Calu3 (cell line): ENCODE measurements at regions of chr9 and their contacts with region 1.

Region 1: DNA sequence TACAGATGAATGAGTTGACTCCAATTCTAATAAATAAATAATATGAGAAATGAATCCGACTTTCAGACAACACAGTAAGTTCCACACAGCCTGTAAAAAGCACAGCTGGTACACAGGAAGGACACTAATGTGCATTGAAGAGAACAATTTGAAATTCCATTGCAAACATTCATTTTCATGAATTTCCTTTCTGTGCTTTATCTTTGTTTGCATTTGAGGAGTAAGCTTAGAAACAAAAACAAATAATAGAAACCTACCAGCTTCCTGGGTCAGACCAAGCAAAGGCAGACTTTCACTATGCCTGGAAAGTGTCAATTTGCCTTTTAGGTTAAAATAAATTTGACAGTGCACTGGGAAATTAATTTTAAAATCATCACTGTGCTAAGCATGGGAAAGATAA is 143.8 kb upstream of the VLDLR start:
- DNase-seq: no peak
- H3K4me3 Mint-ChIP-seq: no peak overlapping the region
- H3K27ac Mint-ChIP-seq: no peak overlapping the region
- H3K4me1 Mint-ChIP-seq: no peaks in the 10 kb centered on the region
- H3K27me3 Mint-ChIP-seq: no peaks in the 10 kb centered on the region
- CTCF ChIP-seq: no peak

Region 2: GRCh38 chr9:2439957-2440356 is 37.8 kb before region 1 on chr9:
- CTCF ChIA-PET with region 1: interaction called, 11 read pairs
- intact Hi-C with region 1: no loop called
- DNase-seq: no peak
- H3K4me3 Mint-ChIP-seq: no peak overlapping the region
- H3K27ac Mint-ChIP-seq: no peak overlapping the region
- H3K4me1 Mint-ChIP-seq: no peaks in the 10 kb centered on the region
- H3K27me3 Mint-ChIP-seq: no peaks in the 10 kb centered on the region
- CTCF ChIP-seq: no peak

Region 3: GRCh38 chr9:2620919-2621679 is 143.3 kb after region 1 on chr9:
- CTCF ChIA-PET with region 1: no interaction called
- intact Hi-C with region 1: no loop called
- DNase-seq: peak; percentile 81
- H3K4me3 Mint-ChIP-seq: peak overlapping the region; percentile 88
- H3K27ac Mint-ChIP-seq: peak overlapping the region; percentile 93
- H3K4me1 Mint-ChIP-seq: peaks cover 24% of the 10 kb centered on the region
- H3K27me3 Mint-ChIP-seq: no peaks in the 10 kb centered on the region
- CTCF ChIP-seq: no peak